Natural killer cell (primary cell): ENCODE measurements at regions of chr21 and their contacts with region 1.

Region 1: DNA sequence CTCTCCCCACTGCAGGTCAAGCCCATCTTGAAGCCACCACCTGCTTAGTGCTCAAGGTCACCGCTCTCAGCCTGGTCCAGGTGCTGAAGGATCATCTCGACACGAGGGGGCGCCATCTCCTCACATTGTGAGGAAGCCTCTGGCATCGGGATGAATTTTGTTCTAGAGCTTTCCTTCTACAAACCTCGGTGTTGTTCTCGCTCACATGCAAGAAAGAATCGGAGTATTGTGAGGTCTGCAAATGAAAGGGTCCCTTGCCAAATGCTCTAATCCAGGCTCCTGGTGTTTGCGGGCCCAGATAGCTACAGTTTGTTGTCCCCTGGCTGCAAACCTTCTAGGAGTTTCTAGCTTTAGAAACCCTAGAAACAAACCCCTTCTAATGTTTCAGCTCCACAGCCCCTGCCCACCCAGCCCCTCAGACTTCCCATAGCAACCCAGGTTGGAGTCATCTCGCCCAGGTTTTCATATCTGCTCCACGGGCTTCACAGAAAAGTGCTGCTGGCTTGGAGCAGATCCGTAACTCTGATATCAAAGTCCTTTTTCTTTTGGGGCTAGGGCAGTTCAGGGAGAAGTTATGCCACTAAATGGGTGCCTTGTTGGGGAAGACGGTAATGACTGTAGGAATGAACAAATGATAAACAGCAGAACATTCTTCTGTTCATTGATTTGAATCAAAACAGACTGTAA is 8.6 kb upstream of the ATP5PO start:
- DNase-seq: peak; percentile 89 to 94
- ATAC-seq: peak; percentile 89 to 98 (median 98)
- H3K4me3 ChIP-seq: no peak overlapping the region
- H3K4me3 Mint-ChIP-seq: no peak overlapping the region
- H3K27ac ChIP-seq: no peak overlapping the region
- H3K27ac Mint-ChIP-seq: peak overlapping the region in 1 of 2 donors; percentile 38
- H3K4me1 ChIP-seq: peaks cover 14% of the 10 kb centered on the region
- H3K4me1 Mint-ChIP-seq: peaks cover 9 to 14% of the 10 kb centered on the region in 2 donors
- H3K27me3 ChIP-seq: no peaks in the 10 kb centered on the region
- H3K27me3 Mint-ChIP-seq: no peaks in the 10 kb centered on the region
- CTCF ChIP-seq: peak; percentile 82

Region 2: GRCh38 chr21:33976082-33977016 is 52.1 kb after region 1 on chr21:
- intact Hi-C with region 1: loop called (anchors 2 kb)
- DNase-seq: peak; percentile 26 to 75
- ATAC-seq: peak; percentile 43 to 60 (median 53)
- H3K4me3 ChIP-seq: no peak overlapping the region
- H3K4me3 Mint-ChIP-seq: peak overlapping the region; percentile 76
- H3K27ac ChIP-seq: peak overlapping the region; percentile 95
- H3K27ac Mint-ChIP-seq: peak overlapping the region; percentile 93 to 98
- H3K4me1 ChIP-seq: peaks cover 44% of the 10 kb centered on the region
- H3K4me1 Mint-ChIP-seq: peaks cover 61 to 66% of the 10 kb centered on the region in 2 donors
- H3K27me3 ChIP-seq: no peaks in the 10 kb centered on the region
- H3K27me3 Mint-ChIP-seq: no peaks in the 10 kb centered on the region
- CTCF ChIP-seq: no peak

Region 3: DNA sequence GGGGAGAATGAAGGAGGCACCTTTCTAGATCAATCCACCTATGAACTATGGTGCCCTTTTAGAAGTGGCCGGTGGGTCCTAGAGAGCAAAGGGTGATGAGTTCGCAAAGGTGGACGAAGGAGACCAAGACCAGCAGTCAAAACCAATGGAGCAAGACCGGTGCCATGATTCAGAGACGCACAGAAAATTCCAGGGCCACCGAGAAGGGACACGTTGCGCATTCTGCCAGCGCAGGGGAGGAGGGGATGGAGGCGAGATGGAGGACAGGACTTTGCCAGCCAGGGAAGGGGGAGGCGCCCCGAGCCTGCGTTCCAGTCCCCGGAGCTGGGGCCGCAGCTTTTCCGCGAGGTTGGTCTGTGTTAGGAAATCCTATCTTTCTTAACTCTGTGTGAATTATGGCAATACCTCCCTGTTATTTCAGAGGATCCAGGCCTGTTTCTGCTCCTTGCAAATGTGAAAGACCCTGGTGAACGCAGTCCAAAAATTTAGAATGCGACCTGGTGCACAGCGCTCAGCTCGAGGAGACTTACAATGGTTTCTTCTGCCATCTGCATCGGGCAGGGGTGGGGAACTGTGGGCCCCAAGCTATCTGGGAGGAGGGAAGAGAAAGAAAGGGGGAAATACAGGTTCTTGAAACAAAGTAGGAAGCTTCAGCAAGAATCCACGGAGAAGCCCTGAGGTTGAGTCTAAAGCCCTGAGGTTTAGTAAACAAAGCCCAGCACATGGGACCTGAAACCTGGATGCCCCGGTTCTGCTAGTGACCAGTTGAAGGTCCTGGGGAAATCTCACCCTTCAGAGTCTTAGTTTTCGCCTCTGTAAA is 278.5 kb after region 1 on chr21:
- intact Hi-C with region 1: loop called (anchors 5 kb)
- DNase-seq: no peak
- ATAC-seq: peak in 1 of 3 donors; percentile 32
- H3K4me3 ChIP-seq: peak overlapping the region; percentile 31
- H3K4me3 Mint-ChIP-seq: peak overlapping the region; percentile 92
- H3K27ac ChIP-seq: no peak overlapping the region
- H3K27ac Mint-ChIP-seq: peak overlapping the region in 1 of 2 donors; percentile 85
- H3K4me1 ChIP-seq: peaks cover 45% of the 10 kb centered on the region
- H3K4me1 Mint-ChIP-seq: peaks cover 42 to 49% of the 10 kb centered on the region in 2 donors
- H3K27me3 ChIP-seq: peaks cover 2% of the 10 kb centered on the region
- H3K27me3 Mint-ChIP-seq: peaks cover 0 to 2% of the 10 kb centered on the region in 2 donors
- CTCF ChIP-seq: no peak

Region 4: DNA sequence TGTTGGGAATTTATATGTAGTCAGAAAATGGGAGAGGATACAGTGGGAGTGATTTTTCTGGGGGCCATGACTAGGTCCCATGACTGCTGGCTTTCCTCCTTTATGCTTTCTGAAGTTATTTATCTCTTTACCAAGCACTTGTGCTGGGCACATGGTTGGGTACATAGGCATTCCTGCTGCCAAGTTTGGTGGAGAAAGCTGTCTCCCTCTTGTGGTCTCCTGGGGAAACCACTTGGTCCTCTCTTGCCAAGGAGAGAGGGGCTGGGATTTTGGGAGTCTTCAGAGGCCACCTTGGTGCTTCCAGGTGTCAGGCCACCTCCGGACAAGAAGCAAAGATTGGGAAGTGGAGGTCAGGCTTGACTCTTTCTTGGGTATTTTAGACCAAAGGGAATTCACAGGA is 319.3 kb after region 1 on chr21:
- intact Hi-C with region 1: loop called (anchors 10 kb)
- DNase-seq: peak in 1 of 2 donors; percentile 51
- ATAC-seq: no peak
- H3K4me3 ChIP-seq: no peak overlapping the region
- H3K4me3 Mint-ChIP-seq: no peak overlapping the region
- H3K27ac ChIP-seq: no peak overlapping the region
- H3K27ac Mint-ChIP-seq: no peak overlapping the region
- H3K4me1 ChIP-seq: no peaks in the 10 kb centered on the region
- H3K4me1 Mint-ChIP-seq: no peaks in the 10 kb centered on the region
- H3K27me3 ChIP-seq: no peaks in the 10 kb centered on the region
- H3K27me3 Mint-ChIP-seq: no peaks in the 10 kb centered on the region
- CTCF ChIP-seq: no peak

Region 5: DNA sequence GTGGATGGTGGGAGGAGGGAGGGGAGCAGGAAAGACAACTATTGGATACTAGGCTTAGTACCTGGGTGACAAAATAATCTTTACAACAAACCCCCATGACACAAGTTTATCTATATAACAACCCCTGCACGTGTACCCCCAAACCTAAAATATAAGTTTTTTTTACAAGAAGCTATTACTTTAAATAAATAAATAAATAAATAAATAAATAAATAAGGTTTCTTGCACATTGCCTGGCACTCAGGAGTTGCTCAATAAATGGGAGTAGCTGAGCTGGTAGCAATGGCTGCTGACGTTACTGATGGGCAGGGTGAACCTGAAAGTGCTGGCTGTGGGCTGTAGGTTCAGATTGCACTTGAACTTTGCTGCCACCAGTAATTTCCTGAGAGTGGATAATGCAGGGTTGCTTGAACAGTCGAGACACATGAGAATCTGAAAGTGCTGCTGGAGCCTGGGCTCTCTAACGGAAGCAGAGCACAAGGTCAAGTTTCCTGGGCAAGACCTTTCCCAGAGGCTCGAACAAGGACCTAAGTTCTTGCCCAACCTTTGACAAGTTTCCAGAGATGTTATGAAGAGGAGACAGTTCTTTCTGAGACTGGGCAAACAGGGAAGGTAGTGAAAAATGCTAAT is 424.8 kb after region 1 on chr21:
- intact Hi-C with region 1: loop called (anchors 2 kb)
- DNase-seq: no peak
- ATAC-seq: no peak
- H3K4me3 ChIP-seq: no peak overlapping the region
- H3K4me3 Mint-ChIP-seq: no peak overlapping the region
- H3K27ac ChIP-seq: no peak overlapping the region
- H3K27ac Mint-ChIP-seq: no peak overlapping the region
- H3K4me1 ChIP-seq: peaks cover 2% of the 10 kb centered on the region
- H3K4me1 Mint-ChIP-seq: peaks cover 6 to 10% of the 10 kb centered on the region in 2 donors
- H3K27me3 ChIP-seq: no peaks in the 10 kb centered on the region
- H3K27me3 Mint-ChIP-seq: peaks cover 0 to 3% of the 10 kb centered on the region in 2 donors
- CTCF ChIP-seq: no peak